Natural killer cell (primary cell): ENCODE measurements at regions of chr1 and their contacts with region 1.

Region 1: GRCh38 chr1:23098463-23099170 is 70.0 kb downstream of the LUZP1 start:
- DNase-seq: peak; percentile 53 to 87
- ATAC-seq: peak; percentile 46 to 67 (median 48)
- H3K4me3 ChIP-seq: no peak overlapping the region
- H3K4me3 Mint-ChIP-seq: peak overlapping the region; percentile 54
- H3K27ac ChIP-seq: no peak overlapping the region
- H3K27ac Mint-ChIP-seq: peak overlapping the region; percentile 57 to 76
- H3K4me1 ChIP-seq: peaks cover 24% of the 10 kb centered on the region
- H3K4me1 Mint-ChIP-seq: peaks cover 46 to 52% of the 10 kb centered on the region in 2 donors
- H3K27me3 ChIP-seq: no peaks in the 10 kb centered on the region
- H3K27me3 Mint-ChIP-seq: no peaks in the 10 kb centered on the region
- CTCF ChIP-seq: peak; percentile 93

Region 2: DNA sequence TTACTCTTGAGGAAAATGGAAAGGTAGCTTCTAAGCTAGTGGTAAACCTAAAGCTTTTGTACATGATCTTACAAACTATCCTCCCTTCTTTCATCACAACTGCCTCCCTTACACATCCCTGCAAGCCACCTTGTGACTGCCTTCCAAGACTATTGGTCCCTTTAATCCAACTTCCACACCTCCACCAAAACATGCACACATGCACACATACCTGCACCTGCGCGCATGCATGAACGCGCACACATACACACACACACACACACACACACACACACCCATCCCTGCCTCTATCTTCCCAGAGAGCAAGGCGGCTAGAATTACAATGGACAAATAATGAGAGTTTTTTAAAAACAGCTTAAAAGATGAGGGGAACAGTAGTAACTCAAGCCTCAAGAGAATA is 11.8 kb after region 1 on chr1:
- intact Hi-C with region 1: loop called (anchors 1 kb)
- DNase-seq: no peak
- ATAC-seq: peak in 2 of 3 donors; percentile 1 to 2
- H3K4me3 ChIP-seq: no peak overlapping the region
- H3K4me3 Mint-ChIP-seq: peak overlapping the region; percentile 29
- H3K27ac ChIP-seq: peak overlapping the region; percentile 73
- H3K27ac Mint-ChIP-seq: peak overlapping the region; percentile 87 to 93
- H3K4me1 ChIP-seq: peaks cover 33% of the 10 kb centered on the region
- H3K4me1 Mint-ChIP-seq: peaks cover 70 to 76% of the 10 kb centered on the region in 2 donors
- H3K27me3 ChIP-seq: no peaks in the 10 kb centered on the region
- H3K27me3 Mint-ChIP-seq: no peaks in the 10 kb centered on the region
- CTCF ChIP-seq: no peak

Region 3: GRCh38 chr1:23118957-23119792 is 20.6 kb after region 1 on chr1:
- intact Hi-C with region 1: loop called (anchors 1 kb)
- DNase-seq: peak; percentile 57 to 70
- ATAC-seq: peak; percentile 77 to 85 (median 80)
- H3K4me3 ChIP-seq: peak overlapping the region; percentile 8
- H3K4me3 Mint-ChIP-seq: peak overlapping the region; percentile 82
- H3K27ac ChIP-seq: peak overlapping the region; percentile 86
- H3K27ac Mint-ChIP-seq: peak overlapping the region; percentile 88 to 97
- H3K4me1 ChIP-seq: peaks cover 29% of the 10 kb centered on the region
- H3K4me1 Mint-ChIP-seq: peaks cover 60 to 76% of the 10 kb centered on the region in 2 donors
- H3K27me3 ChIP-seq: no peaks in the 10 kb centered on the region
- H3K27me3 Mint-ChIP-seq: no peaks in the 10 kb centered on the region
- CTCF ChIP-seq: no peak

Region 4: GRCh38 chr1:23168457-23169194 is 70.0 kb after region 1 on chr1 and contains the start of gene LUZP1:
- intact Hi-C with region 1: loop called (anchors 1 kb)
- DNase-seq: peak; percentile 87 to 90
- ATAC-seq: peak; percentile 90 to 94 (median 92)
- H3K4me3 ChIP-seq: peak within 1 kb of the TSS; percentile 91
- H3K4me3 Mint-ChIP-seq: peak within 1 kb of the TSS; percentile 97
- H3K27ac ChIP-seq: peak within 1 kb of the TSS; percentile 63
- H3K27ac Mint-ChIP-seq: peak within 1 kb of the TSS; percentile 84 to 97
- H3K4me1 ChIP-seq: peaks cover 18% of the 10 kb centered on the region
- H3K4me1 Mint-ChIP-seq: peaks cover 42 to 52% of the 10 kb centered on the region in 2 donors
- H3K27me3 ChIP-seq: no peaks in the 10 kb centered on the region
- H3K27me3 Mint-ChIP-seq: no peaks in the 10 kb centered on the region
- CTCF ChIP-seq: no peak
- total RNA-seq, gene LUZP1: 37.0 to 49.4 (median 39.6) TPM

Region 5: GRCh38 chr1:23178950-23179349 is 80.3 kb after region 1 on chr1:
- intact Hi-C with region 1: loop called (anchors 1 kb)
- DNase-seq: peak in 1 of 2 donors; percentile 15
- ATAC-seq: peak in 1 of 3 donors; percentile 37
- H3K4me3 ChIP-seq: no peak overlapping the region
- H3K4me3 Mint-ChIP-seq: peak overlapping the region; percentile 57
- H3K27ac ChIP-seq: no peak overlapping the region
- H3K27ac Mint-ChIP-seq: no peak overlapping the region
- H3K4me1 ChIP-seq: peaks cover 13% of the 10 kb centered on the region
- H3K4me1 Mint-ChIP-seq: peaks cover 9 to 27% of the 10 kb centered on the region in 2 donors
- H3K27me3 ChIP-seq: no peaks in the 10 kb centered on the region
- H3K27me3 Mint-ChIP-seq: no peaks in the 10 kb centered on the region
- CTCF ChIP-seq: no peak

Region 6: DNA sequence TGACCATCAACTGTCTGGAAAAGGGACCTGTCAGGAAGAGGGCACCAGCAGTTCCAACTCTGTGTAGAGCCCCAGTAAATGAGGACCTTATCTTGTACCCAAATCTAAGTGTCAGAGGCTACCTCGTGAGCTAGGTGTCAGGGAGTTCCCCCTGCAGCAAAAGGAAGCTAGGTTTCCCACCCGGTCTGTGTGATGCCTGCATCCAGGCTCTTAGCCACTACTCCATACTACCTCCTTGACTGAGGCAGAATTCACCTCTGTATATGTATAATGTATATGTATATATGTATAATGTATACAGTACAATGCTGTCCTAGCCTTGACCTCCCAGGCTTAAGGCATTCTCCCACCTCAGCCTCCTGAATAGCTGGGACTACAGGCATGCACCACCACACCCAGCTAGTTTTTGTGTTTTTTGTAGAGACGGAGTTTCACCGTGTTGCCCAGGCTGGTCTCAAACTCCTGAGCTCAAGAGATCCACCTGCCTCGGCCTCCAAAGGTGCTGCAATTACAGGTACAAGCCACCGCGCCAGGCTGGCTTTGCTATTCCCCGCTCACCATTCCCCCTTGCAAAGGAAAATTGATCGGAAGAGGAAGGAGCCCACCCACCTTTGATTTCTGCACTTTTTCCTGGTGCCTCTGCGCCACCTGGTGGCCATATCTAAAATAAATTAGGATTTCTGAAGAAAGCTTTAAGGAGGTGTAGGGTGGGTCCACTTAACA is 85.8 kb after region 1 on chr1:
- intact Hi-C with region 1: loop called (anchors 1 kb)
- DNase-seq: peak; percentile 34 to 82
- ATAC-seq: peak; percentile 45 to 59 (median 52)
- H3K4me3 ChIP-seq: no peak overlapping the region
- H3K4me3 Mint-ChIP-seq: peak overlapping the region; percentile 70
- H3K27ac ChIP-seq: no peak overlapping the region
- H3K27ac Mint-ChIP-seq: peak overlapping the region; percentile 2 to 69
- H3K4me1 ChIP-seq: peaks cover 11% of the 10 kb centered on the region
- H3K4me1 Mint-ChIP-seq: peaks cover 4 to 11% of the 10 kb centered on the region in 2 donors
- H3K27me3 ChIP-seq: no peaks in the 10 kb centered on the region
- H3K27me3 Mint-ChIP-seq: no peaks in the 10 kb centered on the region
- CTCF ChIP-seq: peak; percentile 93

Region 7: GRCh38 chr1:23282957-23283356 is 184.3 kb after region 1 on chr1:
- intact Hi-C with region 1: loop called (anchors 10 kb)
- DNase-seq: no peak
- ATAC-seq: no peak
- H3K4me3 ChIP-seq: no peak overlapping the region
- H3K4me3 Mint-ChIP-seq: no peak overlapping the region
- H3K27ac ChIP-seq: no peak overlapping the region
- H3K27ac Mint-ChIP-seq: no peak overlapping the region
- H3K4me1 ChIP-seq: no peaks in the 10 kb centered on the region
- H3K4me1 Mint-ChIP-seq: no peaks in the 10 kb centered on the region
- H3K27me3 ChIP-seq: no peaks in the 10 kb centered on the region
- H3K27me3 Mint-ChIP-seq: no peaks in the 10 kb centered on the region
- CTCF ChIP-seq: no peak